Activated naive CD4-positive, alpha-beta T cell treated with anti-CD3 and anti-CD28 coated beads for 36 hours (primary cell): ENCODE measurements at regions of chr9 and their contacts with region 1.

Region 1: DNA sequence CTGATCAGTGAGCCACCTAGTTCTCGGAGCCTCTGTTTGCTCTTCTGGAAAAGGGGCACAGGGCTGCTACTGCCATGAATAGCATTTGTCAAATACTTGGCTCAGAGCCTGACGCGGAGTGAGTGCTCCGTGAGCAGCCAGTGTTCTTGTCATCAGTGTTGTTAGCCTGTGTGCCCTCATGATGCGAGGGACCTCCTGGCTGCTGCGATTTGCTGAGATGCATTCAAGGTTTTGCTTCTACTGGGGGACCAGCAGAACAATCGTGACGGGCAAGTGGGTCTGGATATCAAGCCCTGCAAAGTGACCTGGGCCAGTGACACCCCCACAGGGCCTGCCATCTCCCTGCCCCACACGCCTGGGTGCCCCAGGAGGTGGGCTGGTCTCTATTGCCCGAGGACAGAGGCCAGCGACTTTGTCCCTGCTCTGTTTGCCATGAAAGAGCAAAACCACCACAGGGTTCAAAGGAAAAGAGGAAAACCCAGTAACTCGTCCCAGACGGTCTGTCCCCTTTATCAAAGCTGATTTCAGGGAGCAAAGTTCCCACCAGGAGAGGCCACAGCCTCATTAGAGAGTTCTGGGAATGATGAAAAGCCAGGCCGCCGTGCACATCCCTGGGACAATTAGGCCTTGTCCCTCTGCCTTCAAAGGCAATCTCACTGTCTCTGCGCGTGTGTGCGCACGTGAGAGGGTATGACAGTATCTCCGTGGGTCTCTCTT is 86.5 kb upstream of the LMX1B start:
- DNase-seq: no peak
- H3K4me3 Mint-ChIP-seq: no peak overlapping the region
- H3K27ac Mint-ChIP-seq: no peak overlapping the region
- H3K4me1 Mint-ChIP-seq: peaks cover 12% of the 10 kb centered on the region
- H3K27me3 Mint-ChIP-seq: peaks cover 2% of the 10 kb centered on the region

Region 2: GRCh38 chr9:126347911-126348760 is 179.1 kb before region 1 on chr9:
- CTCF ChIA-PET with region 1: no interaction called
- intact Hi-C with region 1: no loop called
- DNase-seq: no peak
- H3K4me3 Mint-ChIP-seq: no peak overlapping the region
- H3K27ac Mint-ChIP-seq: no peak overlapping the region
- H3K4me1 Mint-ChIP-seq: no peaks in the 10 kb centered on the region
- H3K27me3 Mint-ChIP-seq: no peaks in the 10 kb centered on the region

Region 3: GRCh38 chr9:126411225-126411947 is 115.9 kb before region 1 on chr9:
- CTCF ChIA-PET with region 1: no interaction called
- intact Hi-C with region 1: no loop called
- DNase-seq: peak; percentile 68
- H3K4me3 Mint-ChIP-seq: peak overlapping the region; percentile 35
- H3K27ac Mint-ChIP-seq: peak overlapping the region; percentile 72
- H3K4me1 Mint-ChIP-seq: peaks cover 33% of the 10 kb centered on the region
- H3K27me3 Mint-ChIP-seq: no peaks in the 10 kb centered on the region

Region 4: GRCh38 chr9:126514047-126514821 is 13.0 kb before region 1 on chr9:
- CTCF ChIA-PET with region 1: interaction called, 11 read pairs
- intact Hi-C with region 1: no loop called
- DNase-seq: peak; percentile 58
- H3K4me3 Mint-ChIP-seq: no peak overlapping the region
- H3K27ac Mint-ChIP-seq: no peak overlapping the region
- H3K4me1 Mint-ChIP-seq: peaks cover 19% of the 10 kb centered on the region
- H3K27me3 Mint-ChIP-seq: peaks cover 62% of the 10 kb centered on the region

Region 5: GRCh38 chr9:127130661-127131538 is 603.6 kb after region 1 on chr9:
- CTCF ChIA-PET with region 1: no interaction called
- intact Hi-C with region 1: no loop called
- DNase-seq: no peak
- H3K4me3 Mint-ChIP-seq: no peak overlapping the region
- H3K27ac Mint-ChIP-seq: no peak overlapping the region
- H3K4me1 Mint-ChIP-seq: no peaks in the 10 kb centered on the region
- H3K27me3 Mint-ChIP-seq: no peaks in the 10 kb centered on the region